ENCODE measurements at regions of chr9 and their contacts with region 1.

Region 1: GRCh38 chr9:2087500-2088313 is 72.6 kb downstream of the SMARCA2 start:
- DNase-seq: no peak
- H3K4me3 ChIP-seq: no peak overlapping the region
- H3K27ac ChIP-seq: peak overlapping the region in 28 of 59 donors; percentile 2 to 82 (median 25)
- H3K27me3 ChIP-seq: no peaks in the 10 kb centered on the region
- CTCF ChIP-seq: peak; percentile 29 to 75 (median 62)

Region 2: GRCh38 chr9:1939926-1940368 is 147.8 kb before region 1 on chr9:
- intact Hi-C with region 1: loop called in 1 of 2 experiments (anchors 10 kb)
- DNase-seq: peak in 3 of 10 donors; percentile 10 to 24 (median 22)
- H3K4me3 ChIP-seq: no peak overlapping the region
- H3K27ac ChIP-seq: no peak overlapping the region
- H3K27me3 ChIP-seq: peaks cover 0 to 3% (median 0%) of the 10 kb centered on the region in 45 donors
- CTCF ChIP-seq: peak in 54 of 56 donors; percentile 32 to 73 (median 63)

Region 3: DNA sequence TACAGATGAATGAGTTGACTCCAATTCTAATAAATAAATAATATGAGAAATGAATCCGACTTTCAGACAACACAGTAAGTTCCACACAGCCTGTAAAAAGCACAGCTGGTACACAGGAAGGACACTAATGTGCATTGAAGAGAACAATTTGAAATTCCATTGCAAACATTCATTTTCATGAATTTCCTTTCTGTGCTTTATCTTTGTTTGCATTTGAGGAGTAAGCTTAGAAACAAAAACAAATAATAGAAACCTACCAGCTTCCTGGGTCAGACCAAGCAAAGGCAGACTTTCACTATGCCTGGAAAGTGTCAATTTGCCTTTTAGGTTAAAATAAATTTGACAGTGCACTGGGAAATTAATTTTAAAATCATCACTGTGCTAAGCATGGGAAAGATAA is 390.0 kb after region 1 on chr9:
- intact Hi-C with region 1: no loop called
- DNase-seq: no peak
- H3K4me3 ChIP-seq: no peak overlapping the region
- H3K27ac ChIP-seq: no peak overlapping the region
- H3K27me3 ChIP-seq: no peaks in the 10 kb centered on the region
- CTCF ChIP-seq: no peak

Measured in dorsolateral prefrontal cortex (tissue), 120 donors.